SK-MEL-5 (cell line): ENCODE measurements at regions of chr7 and their contacts with region 1.

Region 1: GRCh38 chr7:30012757-30013156 is 13.7 kb downstream of the FKBP14 start:
- DNase-seq: no peak

Region 2: DNA sequence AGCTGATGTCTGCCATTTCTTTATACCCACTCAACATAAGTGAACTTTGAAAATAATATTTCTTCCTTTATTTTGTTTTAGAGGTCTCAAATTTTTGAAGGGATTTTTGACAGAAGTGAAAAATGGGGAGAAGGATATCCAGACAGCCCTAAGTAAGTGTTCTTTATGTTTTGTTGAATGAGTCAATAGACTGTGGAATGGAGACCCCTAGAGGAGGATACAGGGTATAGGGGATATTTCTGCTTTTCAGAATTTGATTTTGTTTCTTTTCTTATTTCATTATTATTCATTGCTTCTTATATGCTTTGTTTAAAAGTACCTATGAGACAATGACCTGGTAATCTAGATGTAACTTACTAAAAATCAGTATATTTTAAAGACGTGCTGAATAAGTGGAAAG is 49.8 kb after region 1 on chr7:
- in situ Hi-C with region 1: loop called (anchors 5 kb)
- DNase-seq: peak; percentile 71